Motor neuron (in vitro differentiated cells): ENCODE measurements at regions of chr21 and their contacts with region 1.

Region 1: GRCh38 chr21:14864211-14865021 is 200.4 kb downstream of the NRIP1 start:
- ATAC-seq: peak; percentile 5 to 93 (median 83)
- H3K4me3 ChIP-seq: no peak overlapping the region
- H3K27ac ChIP-seq: no peak overlapping the region
- H3K4me1 ChIP-seq: peaks cover 0 to 4% of the 10 kb centered on the region in 2 donors

Region 2: DNA sequence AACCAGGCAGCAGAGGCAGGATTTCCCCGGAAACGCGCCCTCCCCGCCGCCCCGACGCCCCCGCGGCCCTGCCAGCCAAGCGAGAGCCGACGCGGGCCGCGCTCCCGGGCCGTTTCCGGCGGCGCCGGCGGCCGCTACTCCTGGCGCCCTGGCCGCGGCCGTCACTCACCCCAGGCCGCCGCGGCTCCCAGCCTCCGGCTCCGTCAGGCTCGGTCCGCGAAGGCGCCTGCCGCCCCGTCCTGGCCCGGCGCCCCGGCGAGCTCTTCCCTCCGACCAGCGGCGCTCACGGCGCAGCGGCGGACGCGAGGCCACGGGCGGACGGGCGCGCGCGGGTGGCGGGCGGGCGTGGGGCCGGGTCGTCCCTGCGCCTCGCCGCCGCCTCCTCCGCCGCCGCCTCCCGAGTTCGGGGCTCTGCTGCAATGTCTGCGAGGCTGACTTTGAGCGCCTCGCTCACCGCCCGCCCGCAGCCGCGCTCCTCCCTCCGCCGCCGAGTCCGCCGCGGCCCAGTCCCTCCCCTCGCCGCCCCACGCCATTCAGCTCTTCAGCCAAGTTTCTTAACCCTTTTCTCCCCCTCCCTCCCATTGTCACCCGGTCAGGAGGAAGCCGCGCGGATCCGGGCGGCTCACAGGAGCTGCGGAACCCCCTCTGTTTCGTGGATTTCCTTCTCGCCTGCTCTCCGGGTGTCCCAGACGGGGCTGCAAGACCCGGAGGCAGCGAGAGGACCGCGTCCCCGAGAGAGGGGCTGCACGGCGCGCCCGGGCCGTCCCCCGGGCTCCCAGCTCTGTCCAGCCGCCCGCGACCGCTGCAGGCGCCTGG is 200.4 kb after region 1 on chr21 and contains the start of gene NRIP1:
- in situ Hi-C with region 1: loop called in 1 of 9 experiments (anchors 25 kb)
- ATAC-seq: peak; percentile 78 to 91 (median 87)
- H3K4me3 ChIP-seq: peak within 1 kb of the TSS; percentile 74 to 91 (median 79)
- H3K27ac ChIP-seq: peak within 1 kb of the TSS; percentile 80 to 92
- H3K4me1 ChIP-seq: peaks cover 11 to 24% of the 10 kb centered on the region in 2 donors
- total RNA-seq, gene NRIP1: 26.2 to 80.5 (median 51.6) TPM

Region 3: DNA sequence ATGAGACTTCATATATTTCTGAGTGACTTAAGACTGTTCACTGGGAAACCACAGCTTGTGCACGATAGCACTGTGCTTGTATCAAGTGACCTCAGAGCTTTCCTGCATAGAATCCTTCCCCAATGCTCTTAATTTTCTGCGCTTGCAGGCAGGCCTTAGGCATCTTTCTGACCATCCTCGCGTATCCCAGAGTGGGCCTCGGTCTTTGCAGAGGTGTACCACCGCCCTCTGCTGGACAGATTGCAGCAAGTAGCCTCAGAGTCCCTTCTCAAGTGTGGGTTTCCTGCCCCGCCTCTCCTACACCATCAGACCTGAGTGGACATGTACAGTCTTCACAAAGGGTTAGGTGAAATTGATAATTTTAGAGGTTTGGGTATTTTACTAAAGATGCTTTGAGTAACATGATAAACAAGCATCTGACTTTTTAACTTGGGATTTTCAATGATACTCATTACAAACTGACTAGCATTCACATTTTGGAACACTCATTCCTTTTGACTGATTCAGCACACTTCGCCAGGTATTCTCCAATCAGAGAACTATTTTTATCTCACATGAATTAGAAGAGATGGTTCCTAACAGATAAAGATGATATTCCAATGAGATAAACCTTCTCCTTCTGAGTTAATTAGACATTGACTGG is 618.8 kb after region 1 on chr21:
- in situ Hi-C with region 1: loop called in 1 of 9 experiments (anchors 25 kb)
- ATAC-seq: peak; percentile 99 to 100 (median 100)
- H3K4me3 ChIP-seq: no peak overlapping the region
- H3K27ac ChIP-seq: no peak overlapping the region
- H3K4me1 ChIP-seq: peaks cover 0 to 3% of the 10 kb centered on the region in 2 donors